Left ventricle myocardium superior (tissue), 1 donor: ENCODE measurements at regions of chr21 and their contacts with region 1.

Region 1: DNA sequence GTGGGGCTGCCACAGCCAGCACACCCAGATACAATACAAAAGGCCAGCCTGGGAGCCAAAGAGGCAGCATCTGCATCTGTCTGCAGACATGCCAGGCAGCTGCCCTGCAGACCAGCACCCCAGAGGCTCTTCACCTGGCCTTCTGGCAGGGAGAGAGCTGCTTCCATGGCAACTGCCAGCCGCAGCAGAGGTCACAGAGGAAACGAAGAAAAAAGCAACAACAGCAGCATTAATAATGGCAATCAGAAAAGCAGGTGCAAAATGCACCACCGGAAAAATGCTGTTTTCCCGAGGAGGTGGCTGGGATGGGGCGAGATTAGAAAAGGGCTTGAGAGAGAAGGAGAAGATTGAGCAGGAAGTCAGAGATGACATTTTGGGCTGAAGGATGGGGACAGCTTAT is 309.5 kb downstream of the PCP4 start:
- DNase-seq: no peak
- ATAC-seq: no peak

Region 2: GRCh38 chr21:39874759-39875158 is 302.0 kb before region 1 on chr21:
- intact Hi-C with region 1: no loop called
- DNase-seq: no peak
- ATAC-seq: no peak

Region 3: DNA sequence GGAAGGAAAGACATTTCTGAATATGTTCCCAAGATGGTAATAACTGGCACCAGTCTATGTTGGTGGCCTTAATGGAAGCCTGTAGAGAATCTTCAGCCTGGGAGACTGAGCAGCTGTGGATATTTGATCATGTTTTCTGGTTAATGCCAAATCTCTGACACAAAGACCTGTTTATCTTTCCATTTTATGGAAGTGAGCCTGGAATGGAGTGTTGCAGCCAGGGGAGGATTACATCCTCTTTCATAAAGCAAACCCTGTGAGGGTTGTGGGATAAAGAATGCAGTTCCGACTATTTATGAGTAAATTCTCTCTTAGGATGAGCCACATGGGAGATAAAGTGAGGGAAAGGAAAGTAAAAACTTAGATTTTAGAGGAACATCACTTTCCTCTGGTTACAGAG is 165.4 kb before region 1 on chr21:
- intact Hi-C with region 1: no loop called
- DNase-seq: no peak
- ATAC-seq: no peak

Region 4: GRCh38 chr21:40235513-40235912 is 58.8 kb after region 1 on chr21:
- intact Hi-C with region 1: loop called (anchors 10 kb)
- DNase-seq: no peak
- ATAC-seq: no peak